PC-9 (cell line): ENCODE measurements at regions of chr3 and their contacts with region 1.

Region 1: DNA sequence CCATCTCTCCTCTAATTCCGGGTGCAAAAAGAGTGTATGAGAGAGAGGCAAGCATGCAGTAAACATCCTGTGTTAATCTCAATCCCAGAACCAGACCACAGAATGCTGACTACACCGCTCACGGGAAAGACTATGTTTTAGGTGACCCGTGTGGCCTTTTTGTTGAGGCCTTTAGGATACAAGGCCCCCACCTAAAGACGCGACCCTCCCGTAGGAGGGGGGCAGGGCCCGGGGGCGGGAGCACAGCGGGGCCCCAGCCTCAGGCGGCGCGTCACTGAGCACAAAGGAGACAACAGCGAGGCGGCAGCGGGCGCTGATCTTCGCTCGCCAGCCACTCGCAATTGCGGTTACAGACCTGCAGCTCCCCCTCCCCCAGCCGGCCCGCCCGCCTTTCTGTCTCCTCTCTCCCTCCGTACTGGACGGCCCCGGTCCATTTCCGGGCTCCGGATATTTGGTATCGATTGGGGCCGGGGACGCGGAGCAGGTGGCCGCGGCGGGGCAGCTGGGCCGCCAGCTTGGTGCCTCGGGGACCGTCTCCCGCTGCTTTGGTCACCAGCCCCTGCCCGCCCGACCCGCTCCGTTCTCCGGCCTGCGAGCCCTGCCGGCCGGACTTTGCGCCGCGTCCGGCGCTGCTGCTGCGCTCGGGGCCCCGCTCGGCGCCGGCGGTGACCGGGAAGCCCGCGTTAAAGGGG is at the start of gene CCDC50:
- DNase-seq: peak; percentile 64 to 80
- H3K4me3 ChIP-seq: peak within 1 kb of the TSS; percentile 85
- H3K27ac ChIP-seq: peak within 1 kb of the TSS; percentile 78
- H3K4me1 ChIP-seq: peaks cover 34% of the 10 kb centered on the region
- H3K27me3 ChIP-seq: no peaks in the 10 kb centered on the region
- CTCF ChIP-seq: no peak
- total RNA-seq, gene CCDC50: 106 and 118 TPM in 2 replicates

Region 2: DNA sequence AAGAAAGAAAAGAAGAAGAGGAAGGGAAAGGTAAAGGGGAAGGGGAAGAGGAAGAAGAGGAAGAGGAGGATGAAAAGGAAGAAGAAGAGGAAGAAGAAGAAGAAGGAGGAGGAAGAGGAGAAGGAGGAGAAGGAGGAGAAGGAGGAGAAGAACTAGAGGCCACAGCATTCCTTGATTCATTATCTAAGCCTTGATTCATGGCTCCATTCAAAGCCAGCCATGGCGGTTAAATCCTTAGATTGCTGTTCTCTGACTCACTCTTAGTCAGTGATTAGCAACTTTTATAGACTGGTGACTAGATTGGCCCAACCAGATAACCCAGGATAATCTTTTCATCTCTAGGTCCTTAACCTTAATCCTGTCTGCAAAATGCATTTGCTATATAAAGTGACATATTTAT is 82.5 kb before region 1 on chr3:
- CTCF ChIA-PET with region 1: interaction called, 4 read pairs
- POLR2A ChIA-PET with region 1: no interaction called
- intact Hi-C with region 1: loop called (anchors 2 kb)
- DNase-seq: peak; percentile 46 to 86
- H3K4me3 ChIP-seq: no peak overlapping the region
- H3K27ac ChIP-seq: no peak overlapping the region
- H3K4me1 ChIP-seq: no peaks in the 10 kb centered on the region
- H3K27me3 ChIP-seq: no peaks in the 10 kb centered on the region
- CTCF ChIP-seq: no peak

Region 3: DNA sequence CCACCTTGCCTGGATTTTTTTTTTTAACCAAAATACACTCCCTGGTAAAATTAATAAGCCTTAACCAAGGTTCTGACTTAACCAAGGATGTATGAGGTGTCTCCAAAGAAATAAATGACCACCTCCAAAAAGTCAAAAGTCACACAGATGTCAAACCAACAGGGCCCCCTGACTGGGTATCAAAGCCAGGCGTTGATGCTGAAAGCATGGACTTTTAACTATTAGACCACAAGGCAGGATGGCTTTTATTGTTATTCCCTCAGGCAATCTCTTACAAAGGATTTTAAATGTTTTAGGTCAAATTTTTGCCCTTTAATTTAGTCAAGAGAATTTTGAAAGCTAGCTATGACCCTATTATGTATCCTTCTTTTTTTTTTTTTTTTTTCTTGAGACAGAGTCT is 69.6 kb before region 1 on chr3:
- CTCF ChIA-PET with region 1: no interaction called
- POLR2A ChIA-PET with region 1: no interaction called
- intact Hi-C with region 1: loop called (anchors 2 kb)
- DNase-seq: no peak
- H3K4me3 ChIP-seq: no peak overlapping the region
- H3K27ac ChIP-seq: no peak overlapping the region
- H3K4me1 ChIP-seq: no peaks in the 10 kb centered on the region
- H3K27me3 ChIP-seq: no peaks in the 10 kb centered on the region
- CTCF ChIP-seq: no peak

Region 4: GRCh38 chr3:191360620-191361019 is 31.5 kb after region 1 on chr3:
- CTCF ChIA-PET with region 1: no interaction called
- POLR2A ChIA-PET with region 1: interaction called, 4 read pairs
- intact Hi-C with region 1: loop called (anchors 1 kb)
- DNase-seq: peak; percentile 54 to 88
- H3K4me3 ChIP-seq: no peak overlapping the region
- H3K27ac ChIP-seq: peak overlapping the region; percentile 53
- H3K4me1 ChIP-seq: peaks cover 51% of the 10 kb centered on the region
- H3K27me3 ChIP-seq: no peaks in the 10 kb centered on the region
- CTCF ChIP-seq: no peak